SK-N-SH (cell line): ENCODE measurements at regions of chr20 and their contacts with region 1.

Region 1: DNA sequence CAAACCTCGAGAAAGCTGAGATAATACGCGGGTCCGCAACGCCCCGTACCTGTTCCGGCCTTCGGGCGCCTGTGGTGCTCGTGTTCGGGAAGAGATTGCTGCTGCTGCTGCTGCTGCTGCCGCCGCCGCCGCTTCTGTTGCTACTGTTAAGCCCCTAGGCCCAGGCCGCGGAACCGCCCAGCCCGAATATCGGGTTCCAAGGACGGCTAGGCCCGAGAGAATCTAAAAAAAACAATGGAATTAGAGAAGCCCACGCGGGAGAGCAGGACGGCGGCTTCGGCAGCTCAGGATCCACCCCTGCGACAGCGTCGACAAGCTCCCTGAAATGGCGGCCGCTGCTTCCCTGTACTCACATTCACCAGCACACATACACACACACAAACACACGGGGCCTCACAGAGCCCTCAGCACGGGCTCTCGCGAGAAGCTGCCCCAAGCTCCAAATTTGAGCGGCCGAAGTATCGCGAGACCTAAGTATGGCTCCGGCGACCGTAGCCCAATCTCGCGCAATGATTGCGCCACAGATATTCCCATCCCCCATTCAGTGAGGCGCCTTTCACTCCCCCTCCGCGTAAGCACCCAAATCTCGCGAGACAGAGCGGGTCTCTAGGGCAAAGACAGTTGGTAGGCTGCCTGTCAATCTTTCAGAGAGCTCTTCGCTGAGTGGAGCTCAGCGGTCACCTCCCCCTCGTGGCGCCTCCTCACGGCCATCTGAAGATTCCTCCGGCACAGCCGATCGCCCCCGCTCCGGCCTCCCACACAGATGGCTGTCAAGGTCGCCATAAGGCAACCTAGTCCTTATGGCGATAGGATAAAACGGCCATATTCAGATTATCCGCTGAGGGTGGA is at the start of gene RBM39:
- DNase-seq: peak; percentile 90
- H3K4me3 ChIP-seq: peak within 1 kb of the TSS; percentile 79 to 82
- H3K27ac ChIP-seq: peak within 1 kb of the TSS; percentile 97 to 99
- H3K4me1 ChIP-seq: peaks cover 12% of the 10 kb centered on the region in 2 experiments; a peak in 3 of 4 replicates
- H3K27me3 ChIP-seq: no peaks in the 10 kb centered on the region
- CTCF ChIP-seq: peak; percentile 41
- EP300 ChIP-seq: peak in 1 of 2 experiments; percentile 34; a peak in 1 of 4 replicates
- RAD21 ChIP-seq: 0 out of 2 replicates have a peak, but pooled peaks have one; percentile 8
- polyA plus RNA-seq, gene RBM39: 68.4 and 98.4 TPM in 2 replicates

Region 2: DNA sequence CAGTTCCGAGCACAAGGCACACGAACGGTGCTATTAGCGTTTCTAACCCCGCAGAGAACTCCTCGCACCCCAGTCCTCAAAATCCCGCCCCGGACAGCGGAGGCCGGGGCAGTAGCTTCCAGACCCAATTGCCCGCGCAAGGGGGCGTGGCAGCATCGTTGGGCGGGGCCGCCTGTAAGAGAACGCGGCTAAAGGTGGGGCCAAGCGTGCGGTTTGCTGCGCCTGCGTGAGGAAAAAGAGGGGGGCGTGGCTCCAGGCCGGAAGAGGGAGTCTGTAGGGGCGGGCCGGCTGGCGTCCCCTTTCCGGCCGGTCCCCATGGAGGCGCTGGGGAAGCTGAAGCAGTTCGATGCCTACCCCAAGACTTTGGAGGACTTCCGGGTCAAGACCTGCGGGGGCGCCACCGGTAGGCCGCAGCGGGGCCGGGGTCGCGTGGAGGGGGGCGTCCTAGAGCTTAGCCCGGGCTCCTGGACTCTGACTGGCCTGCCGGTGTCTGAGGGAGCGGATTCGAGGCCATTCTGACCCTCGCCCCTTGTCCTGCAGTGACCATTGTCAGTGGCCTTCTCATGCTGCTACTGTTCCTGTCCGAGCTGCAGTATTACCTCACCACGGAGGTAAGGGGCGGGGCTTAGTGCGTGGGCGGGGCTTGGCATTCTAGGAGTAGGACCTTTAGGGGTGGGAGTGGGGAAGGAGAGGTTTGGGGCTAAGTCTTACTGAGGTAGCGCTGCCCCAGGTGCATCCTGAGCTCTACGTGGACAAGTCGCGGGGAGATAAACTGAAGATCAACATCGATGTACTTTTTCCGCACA is 200.1 kb before region 1 on chr20 and contains the start of gene ERGIC3:
- CTCF ChIA-PET with region 1: interaction called, 3 read pairs
- POLR2A ChIA-PET with region 1: interaction called, 14 read pairs
- DNase-seq: peak; percentile 97
- H3K4me3 ChIP-seq: peak within 1 kb of the TSS; percentile 82
- H3K27ac ChIP-seq: peak within 1 kb of the TSS; percentile 63 to 84; a peak in 3 of 4 replicates
- H3K4me1 ChIP-seq: peaks cover 0 to 14% of the 10 kb centered on the region in 2 experiments; a peak in 2 of 4 replicates
- H3K27me3 ChIP-seq: no peaks in the 10 kb centered on the region
- CTCF ChIP-seq: no peak
- EP300 ChIP-seq: no peak
- RAD21 ChIP-seq: no peak
- polyA plus RNA-seq, gene ERGIC3: 661 and 799 TPM in 2 replicates

Region 3: DNA sequence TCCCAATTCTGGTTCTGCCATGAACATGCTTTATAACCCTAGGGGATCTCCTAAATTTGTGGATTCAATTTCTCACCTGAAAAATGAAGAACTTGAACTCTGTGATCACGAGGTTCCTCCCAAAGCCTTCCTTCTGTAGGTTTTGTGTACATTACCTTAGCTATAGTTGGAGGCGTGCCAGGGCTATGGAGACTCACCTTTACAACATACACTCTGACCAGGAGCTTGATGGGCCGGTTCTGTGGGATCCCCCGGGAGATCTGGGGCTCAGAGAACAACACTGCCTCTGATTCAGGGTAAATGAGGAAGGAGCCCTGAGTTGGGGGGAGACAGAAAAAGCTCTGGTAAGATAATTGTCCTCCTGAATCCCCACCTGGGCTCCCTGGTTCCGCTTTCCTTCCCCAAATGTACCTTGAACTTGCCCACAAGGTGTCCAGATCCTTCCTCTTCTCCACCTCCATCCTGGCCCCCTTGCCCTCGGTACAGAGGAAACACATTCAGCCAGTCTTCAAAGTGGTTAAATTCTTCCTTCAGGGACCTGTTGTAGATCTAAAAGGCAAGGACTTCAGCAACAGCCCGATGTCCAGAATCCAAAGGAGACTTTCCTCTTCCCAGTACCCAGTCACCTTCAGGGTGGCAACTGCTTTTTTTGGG is 166.0 kb before region 1 on chr20:
- CTCF ChIA-PET with region 1: no interaction called
- POLR2A ChIA-PET with region 1: no interaction called
- DNase-seq: no peak
- H3K4me3 ChIP-seq: no peak overlapping the region
- H3K27ac ChIP-seq: no peak overlapping the region
- H3K4me1 ChIP-seq: no peaks in the 10 kb centered on the region
- H3K27me3 ChIP-seq: no peaks in the 10 kb centered on the region
- CTCF ChIP-seq: no peak
- EP300 ChIP-seq: no peak
- RAD21 ChIP-seq: no peak

Region 4: DNA sequence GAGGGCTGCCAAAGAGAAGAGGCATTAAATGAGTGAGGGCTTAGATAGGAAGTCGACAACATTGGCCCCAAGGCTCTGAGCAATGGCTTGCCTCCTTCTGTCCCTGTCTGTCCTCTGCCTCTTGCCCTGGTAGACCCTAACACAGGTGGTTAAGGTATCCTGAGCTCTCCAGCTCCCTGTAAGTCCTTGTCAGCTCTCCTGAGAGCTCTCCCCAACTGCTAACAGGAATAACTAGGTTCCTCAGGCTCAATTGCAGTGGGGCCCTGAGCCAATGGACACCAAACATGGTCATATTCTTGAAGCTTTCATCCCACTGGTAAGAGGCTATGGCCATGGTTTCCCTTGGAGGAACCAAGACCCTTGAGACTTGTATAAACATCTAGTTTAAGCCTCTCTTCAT is 72.4 kb before region 1 on chr20:
- CTCF ChIA-PET with region 1: no interaction called
- POLR2A ChIA-PET with region 1: no interaction called
- DNase-seq: no peak
- H3K4me3 ChIP-seq: no peak overlapping the region
- H3K27ac ChIP-seq: no peak overlapping the region
- H3K4me1 ChIP-seq: no peaks in the 10 kb centered on the region; a peak in 1 of 4 replicates
- H3K27me3 ChIP-seq: no peaks in the 10 kb centered on the region
- CTCF ChIP-seq: no peak
- EP300 ChIP-seq: no peak
- RAD21 ChIP-seq: no peak

Region 5: DNA sequence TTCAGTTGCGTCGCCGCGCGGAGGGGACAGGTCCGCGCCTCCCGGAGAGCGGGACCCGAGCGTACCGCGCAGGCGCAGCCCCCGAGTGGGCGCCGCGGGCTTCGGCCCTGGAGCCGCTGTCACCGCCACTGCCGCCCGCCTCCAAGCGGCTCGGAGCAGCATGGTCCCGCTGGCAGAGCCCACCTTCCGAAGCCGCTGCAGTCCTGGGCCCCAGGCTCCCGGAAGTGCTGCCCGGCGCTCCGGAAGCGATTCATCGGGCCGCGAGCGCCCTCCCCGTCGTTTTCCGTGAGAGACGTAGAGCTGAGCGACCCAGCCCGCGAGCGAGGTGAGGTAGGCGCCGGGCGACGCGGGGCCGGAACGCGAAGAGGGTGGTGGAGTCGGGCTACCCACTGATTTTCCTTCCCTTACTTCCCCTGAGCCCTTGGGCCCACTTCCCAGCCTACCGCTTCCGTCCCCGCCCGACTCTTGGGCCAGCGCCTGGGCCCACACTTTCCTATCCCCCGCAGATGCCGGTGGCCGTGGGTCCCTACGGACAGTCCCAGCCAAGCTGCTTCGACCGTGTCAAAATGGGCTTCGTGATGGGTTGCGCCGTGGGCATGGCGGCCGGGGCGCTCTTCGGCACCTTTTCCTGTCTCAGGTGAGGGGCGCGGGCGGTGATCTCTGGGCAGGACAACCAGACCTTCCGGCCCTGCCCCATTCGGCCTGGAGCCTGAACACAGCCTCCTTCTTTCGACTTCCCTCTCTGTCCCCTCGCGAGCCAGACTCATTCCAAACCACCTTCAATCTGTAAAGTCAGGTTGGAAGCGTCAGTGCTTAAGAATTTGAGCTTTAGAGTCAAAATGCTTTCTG is 42.8 kb before region 1 on chr20 and contains the starts of genes NFS1 and ROMO1:
- CTCF ChIA-PET with region 1: interaction called, 5 read pairs
- POLR2A ChIA-PET with region 1: interaction called, 17 read pairs
- DNase-seq: peak; percentile 97
- H3K4me3 ChIP-seq: peak within 1 kb of the TSS; percentile 82 to 90
- H3K27ac ChIP-seq: peak within 1 kb of the TSS; percentile 88 to 89
- H3K4me1 ChIP-seq: peaks cover 0 to 16% of the 10 kb centered on the region in 2 experiments; a peak in 3 of 4 replicates
- H3K27me3 ChIP-seq: no peaks in the 10 kb centered on the region
- CTCF ChIP-seq: peak; percentile 23
- EP300 ChIP-seq: 0 out of 4 replicates have a peak, but pooled peaks of 1 of the 2 experiments have one; percentile 13
- RAD21 ChIP-seq: peak; percentile 11; the same call in 1 of the 2 replicates
- polyA plus RNA-seq, gene NFS1: 75.6 and 89.7 TPM in 2 replicates
- polyA plus RNA-seq, gene ROMO1: 1,087 and 1,273 TPM in 2 replicates

Region 6: DNA sequence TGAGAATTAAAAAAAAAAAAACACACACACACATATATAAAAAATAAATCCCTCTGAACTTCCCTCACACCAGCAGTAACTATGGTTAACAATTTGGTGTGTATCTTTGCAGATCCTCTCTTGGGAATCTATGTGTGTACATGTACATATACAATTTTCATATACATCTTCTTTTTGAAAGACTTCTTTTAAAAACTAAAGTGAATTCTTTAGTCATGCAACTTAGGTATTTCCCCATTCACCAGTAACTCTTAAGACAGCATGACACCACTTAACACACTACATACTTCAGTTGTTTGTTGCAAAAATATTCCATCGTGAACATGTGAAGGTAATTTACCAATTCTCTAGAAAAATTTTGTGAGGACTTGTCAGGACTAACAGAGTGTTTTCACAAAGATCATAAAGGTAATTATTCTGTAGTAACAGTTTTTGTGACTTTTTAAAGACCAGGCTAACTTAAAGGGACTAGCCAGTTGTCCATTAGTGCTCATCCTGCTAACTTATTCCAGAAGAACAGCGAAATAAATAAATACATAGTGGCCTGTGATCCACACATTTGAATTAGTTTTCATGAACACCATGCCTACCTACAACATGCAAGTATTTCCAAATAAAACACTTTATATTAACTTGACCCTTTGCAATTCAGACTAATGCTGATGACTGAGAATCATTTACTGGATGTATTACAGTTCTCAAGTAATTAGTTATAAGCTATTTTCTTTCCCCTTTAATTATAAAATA is 12.1 kb before region 1 on chr20:
- CTCF ChIA-PET with region 1: interaction called, 6 read pairs
- POLR2A ChIA-PET with region 1: interaction called, 10 read pairs
- DNase-seq: no peak
- H3K4me3 ChIP-seq: no peak overlapping the region
- H3K27ac ChIP-seq: peak overlapping the region in 1 of 2 experiments; percentile 10; a peak in 1 of 4 replicates
- H3K4me1 ChIP-seq: peaks cover 2 to 9% of the 10 kb centered on the region in 2 experiments; a peak in 2 of 4 replicates
- H3K27me3 ChIP-seq: no peaks in the 10 kb centered on the region
- CTCF ChIP-seq: no peak
- EP300 ChIP-seq: no peak
- RAD21 ChIP-seq: no peak

Region 7: GRCh38 chr20:35771689-35772562 is 29.8 kb after region 1 on chr20 and contains the start of gene PHF20:
- CTCF ChIA-PET with region 1: interaction called, 12 read pairs
- POLR2A ChIA-PET with region 1: interaction called, 36 read pairs
- DNase-seq: peak; percentile 98
- H3K4me3 ChIP-seq: peak within 1 kb of the TSS; percentile 75 to 91
- H3K27ac ChIP-seq: peak within 1 kb of the TSS; percentile 66 to 68
- H3K4me1 ChIP-seq: peaks cover 18 to 26% of the 10 kb centered on the region in 2 experiments; a peak in 3 of 4 replicates
- H3K27me3 ChIP-seq: no peaks in the 10 kb centered on the region
- CTCF ChIP-seq: no peak
- EP300 ChIP-seq: no peak
- RAD21 ChIP-seq: no peak
- polyA plus RNA-seq, gene PHF20: 23.8 and 24.9 TPM in 2 replicates

Region 8: GRCh38 chr20:35883778-35884540 is 141.8 kb after region 1 on chr20:
- CTCF ChIA-PET with region 1: interaction called, 40 read pairs
- POLR2A ChIA-PET with region 1: interaction called, 15 read pairs
- DNase-seq: peak; percentile 61
- H3K4me3 ChIP-seq: peak overlapping the region; percentile 30 to 50
- H3K27ac ChIP-seq: peak overlapping the region; percentile 79 to 100
- H3K4me1 ChIP-seq: peaks cover 19 to 25% of the 10 kb centered on the region in 2 experiments
- H3K27me3 ChIP-seq: no peaks in the 10 kb centered on the region
- CTCF ChIP-seq: peak; percentile 85
- EP300 ChIP-seq: peak; percentile 37 to 83; a peak in 3 of 4 replicates
- RAD21 ChIP-seq: peak; percentile 92